Activated naive CD4-positive, alpha-beta T cell treated with anti-CD3 and anti-CD28 coated beads for 36 hours (primary cell): ENCODE measurements at regions of chr14 and their contacts with region 1.

Region 1: DNA sequence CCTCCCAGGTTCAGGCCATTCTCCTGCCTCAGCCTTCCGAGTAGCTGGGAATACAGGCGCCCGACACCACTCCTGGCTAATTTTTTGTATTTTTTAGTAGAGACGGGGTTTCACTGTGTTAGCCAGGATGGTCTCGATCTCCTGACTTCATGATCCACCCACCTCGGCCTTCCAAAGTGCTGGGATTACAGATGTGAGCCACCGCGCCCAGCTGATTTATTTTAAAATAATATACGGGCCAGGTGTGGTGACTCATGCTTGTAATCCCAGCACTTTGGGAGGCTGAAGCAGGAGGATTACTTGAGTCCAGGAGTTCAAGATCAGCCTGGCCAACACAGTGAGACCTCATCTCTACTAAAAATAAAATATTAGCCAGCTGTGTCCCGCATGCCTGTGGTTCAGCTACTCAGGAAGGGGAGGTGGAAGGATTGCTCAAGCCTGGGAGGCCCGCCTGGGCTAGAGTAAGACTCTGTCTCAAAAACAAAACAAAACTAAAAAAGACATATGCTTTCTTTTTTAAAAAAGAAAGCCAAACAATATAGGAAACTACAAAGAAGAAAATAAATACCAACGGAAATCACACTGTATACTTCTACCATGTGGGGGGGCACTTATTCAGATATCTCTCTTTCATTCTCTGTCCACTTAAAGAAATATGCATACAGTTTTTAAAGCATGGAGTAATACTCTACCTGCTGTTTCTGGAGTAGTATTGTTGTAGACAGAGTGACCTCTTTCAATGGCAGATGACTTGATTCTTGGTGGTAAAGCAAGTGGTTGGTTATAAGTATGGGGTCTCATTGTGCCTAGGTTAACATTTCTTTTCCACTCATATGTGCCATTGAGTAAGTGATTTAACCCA is 930 bp upstream of the MIA2 start:
- DNase-seq: no peak
- H3K4me3 Mint-ChIP-seq: no peak overlapping the region
- H3K27ac Mint-ChIP-seq: no peak overlapping the region
- H3K4me1 Mint-ChIP-seq: peaks cover 38% of the 10 kb centered on the region
- H3K27me3 Mint-ChIP-seq: no peaks in the 10 kb centered on the region

Region 2: DNA sequence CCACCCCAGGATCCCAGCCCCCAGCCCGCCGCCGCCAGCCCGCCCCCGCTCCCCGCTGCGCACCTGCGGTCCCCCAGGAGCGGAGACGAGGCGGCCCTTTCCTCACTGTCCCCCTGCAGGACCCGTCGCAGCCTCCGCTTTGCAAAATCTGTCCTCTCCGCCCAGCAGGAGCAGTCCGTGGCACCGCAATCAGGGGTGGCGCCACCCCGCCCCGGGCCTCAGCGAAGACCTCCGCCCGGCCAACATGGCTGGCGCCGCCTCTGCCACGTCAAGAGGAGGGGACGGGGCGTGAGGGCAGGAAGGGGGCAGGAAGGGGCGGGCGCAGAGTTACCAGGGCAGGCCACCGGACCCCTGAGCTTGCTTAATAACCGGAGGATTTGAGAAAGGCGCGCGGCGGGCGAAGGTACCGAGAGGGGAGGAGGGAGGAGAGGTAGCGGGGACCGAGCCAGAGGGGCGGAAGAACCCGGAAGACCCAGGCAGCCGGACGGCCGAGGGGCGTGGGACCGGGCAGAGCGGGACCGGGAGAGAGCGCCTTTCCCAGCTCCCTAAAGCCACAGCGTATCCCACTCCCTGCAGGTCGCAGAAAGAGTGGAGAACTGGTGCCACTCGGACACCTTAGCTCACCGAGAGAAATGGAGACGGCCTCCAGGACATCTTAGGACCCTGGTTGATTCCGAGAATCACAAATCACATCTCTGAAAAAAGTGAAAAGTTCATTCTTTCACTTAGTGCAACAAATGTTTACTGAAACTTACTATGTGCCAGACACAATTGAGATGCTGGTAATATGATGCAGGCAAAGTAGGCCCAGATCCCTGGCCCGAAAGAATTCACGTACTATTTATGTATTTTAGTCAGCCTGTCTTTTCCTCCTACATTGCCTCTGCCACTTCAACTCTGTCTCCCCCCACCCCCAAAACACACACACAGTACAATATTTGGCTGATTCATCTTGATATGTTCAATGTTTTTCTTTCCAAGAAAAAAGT is 129.5 kb before region 1 on chr14 and contains the start of gene SEC23A:
- CTCF ChIA-PET with region 1: interaction called, 9 read pairs
- intact Hi-C with region 1: loop called (anchors 1 kb)
- DNase-seq: peak; percentile 87
- H3K4me3 Mint-ChIP-seq: peak within 1 kb of the TSS; percentile 87
- H3K27ac Mint-ChIP-seq: peak within 1 kb of the TSS; percentile 96
- H3K4me1 Mint-ChIP-seq: peaks cover 42% of the 10 kb centered on the region
- H3K27me3 Mint-ChIP-seq: no peaks in the 10 kb centered on the region
- total RNA-seq, gene SEC23A: 40.2 to 48.0 TPM

Region 3: DNA sequence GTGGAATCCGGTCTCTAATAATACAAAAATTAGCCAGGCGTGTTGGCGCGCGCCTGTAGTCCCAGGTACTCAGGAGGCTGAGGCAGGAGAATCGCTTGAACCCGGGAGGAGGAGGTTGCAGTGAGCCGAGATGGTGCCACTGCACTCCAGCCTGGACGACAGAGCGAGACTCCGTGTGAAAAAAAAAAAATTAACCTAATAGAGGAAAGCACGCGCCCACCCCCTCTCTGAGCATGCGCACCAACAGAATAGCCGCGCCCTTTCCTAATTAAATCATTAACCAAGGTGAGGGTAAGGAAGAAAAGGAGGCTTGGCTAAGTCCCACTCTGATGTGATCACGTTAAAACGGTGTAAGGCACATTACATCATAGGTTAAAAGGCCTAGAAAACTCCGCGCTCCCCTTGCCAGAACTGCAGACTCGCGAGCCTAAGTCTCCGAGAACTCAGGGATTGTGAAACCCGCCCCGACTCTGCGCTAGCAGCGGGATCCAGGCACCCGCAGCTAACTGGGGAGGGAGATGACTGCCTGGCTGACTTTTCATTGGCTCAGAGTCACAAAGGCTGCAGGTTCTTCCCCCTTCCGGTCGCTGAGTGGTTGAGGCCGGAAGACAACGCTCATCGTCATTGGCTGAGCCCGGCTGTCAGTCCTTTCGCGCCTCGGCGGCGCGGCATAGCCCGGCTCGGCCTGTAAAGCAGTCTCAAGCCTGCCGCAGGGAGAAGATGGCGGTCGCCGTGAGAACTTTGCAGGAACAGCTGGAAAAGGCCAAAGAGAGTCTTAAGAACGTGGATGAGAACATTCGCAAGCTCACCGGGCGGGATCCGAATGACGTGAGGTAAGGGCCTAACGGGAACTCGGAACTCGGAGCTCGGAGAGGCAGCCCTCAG is 58.0 kb before region 1 on chr14 and contains the start of gene PNN:
- CTCF ChIA-PET with region 1: no interaction called
- intact Hi-C with region 1: loop called (anchors 1 kb)
- DNase-seq: peak; percentile 98
- H3K4me3 Mint-ChIP-seq: peak within 1 kb of the TSS; percentile 100
- H3K27ac Mint-ChIP-seq: peak within 1 kb of the TSS; percentile 100
- H3K4me1 Mint-ChIP-seq: peaks cover 44% of the 10 kb centered on the region
- H3K27me3 Mint-ChIP-seq: no peaks in the 10 kb centered on the region
- total RNA-seq, gene PNN: 99.6 to 100 TPM

Region 4: GRCh38 chr14:39368261-39368959 is 135.6 kb after region 1 on chr14:
- CTCF ChIA-PET with region 1: interaction called, 9 read pairs
- intact Hi-C with region 1: loop called (anchors 1 kb)
- DNase-seq: peak; percentile 63
- H3K4me3 Mint-ChIP-seq: no peak overlapping the region
- H3K27ac Mint-ChIP-seq: no peak overlapping the region
- H3K4me1 Mint-ChIP-seq: no peaks in the 10 kb centered on the region
- H3K27me3 Mint-ChIP-seq: no peaks in the 10 kb centered on the region

Region 5: DNA sequence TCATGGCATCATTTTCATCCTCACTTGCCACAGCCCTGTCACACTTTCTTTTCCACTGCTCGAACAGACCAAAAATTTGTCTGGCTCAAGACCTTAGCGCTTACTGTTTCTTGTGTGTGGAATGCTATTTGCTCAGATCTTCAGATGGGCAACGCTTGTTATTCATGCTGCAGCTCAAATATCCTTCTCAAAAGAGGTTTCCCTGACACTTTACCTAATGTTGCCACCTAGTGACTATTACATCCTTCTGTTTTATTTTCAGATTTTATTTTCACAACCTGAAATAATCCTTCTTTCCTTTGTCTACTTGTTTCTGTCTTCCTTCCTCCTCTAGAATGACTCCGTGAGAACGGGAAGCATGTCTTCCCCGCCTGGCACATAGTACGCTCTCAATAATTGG is 193.8 kb after region 1 on chr14:
- CTCF ChIA-PET with region 1: interaction called, 33 read pairs
- intact Hi-C with region 1: loop called (anchors 1 kb)
- DNase-seq: no peak
- H3K4me3 Mint-ChIP-seq: peak overlapping the region; percentile 45
- H3K27ac Mint-ChIP-seq: no peak overlapping the region
- H3K4me1 Mint-ChIP-seq: peaks cover 63% of the 10 kb centered on the region
- H3K27me3 Mint-ChIP-seq: no peaks in the 10 kb centered on the region

Region 6: GRCh38 chr14:39469094-39469710 is 236.4 kb after region 1 on chr14:
- CTCF ChIA-PET with region 1: interaction called, 12 read pairs
- intact Hi-C with region 1: loop called (anchors 1 kb)
- DNase-seq: peak; percentile 70
- H3K4me3 Mint-ChIP-seq: no peak overlapping the region
- H3K27ac Mint-ChIP-seq: no peak overlapping the region
- H3K4me1 Mint-ChIP-seq: no peaks in the 10 kb centered on the region
- H3K27me3 Mint-ChIP-seq: peaks cover 9% of the 10 kb centered on the region